ENCODE measurements at regions of chr1 and their contacts with region 1.

Region 1: DNA sequence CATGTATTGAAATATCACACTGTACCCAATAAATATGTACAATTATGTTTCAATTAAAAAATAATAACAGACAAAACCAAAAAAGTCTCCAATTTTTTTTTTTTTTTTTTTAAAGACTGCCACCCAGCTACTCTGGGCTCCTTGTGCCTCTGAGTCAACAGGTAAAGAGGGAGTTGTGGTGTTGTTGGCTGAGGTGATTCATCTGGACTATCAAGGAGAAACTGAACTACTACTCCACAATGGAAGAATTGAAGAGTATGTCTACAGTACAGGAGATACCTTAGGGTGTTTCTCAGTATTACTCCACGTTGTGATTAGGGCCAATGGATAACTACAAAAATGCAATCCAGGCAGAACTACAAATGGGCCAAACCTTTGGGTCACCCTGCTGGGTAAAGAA is 67.9 kb downstream of the SCMH1 start:
- DNase-seq: no peak
- H3K4me3 ChIP-seq: no peak overlapping the region
- H3K27ac ChIP-seq: no peak overlapping the region
- H3K4me1 ChIP-seq: no peaks in the 10 kb centered on the region
- H3K27me3 ChIP-seq: no peaks in the 10 kb centered on the region
- CTCF ChIP-seq: no peak

Region 2: GRCh38 chr1:40884055-40884795 is 289.9 kb before region 1 on chr1:
- CTCF ChIA-PET with region 1: no interaction called
- POLR2A ChIA-PET with region 1: no interaction called
- intact Hi-C with region 1: no loop called
- DNase-seq: no peak
- H3K4me3 ChIP-seq: no peak overlapping the region
- H3K27ac ChIP-seq: no peak overlapping the region
- H3K4me1 ChIP-seq: peaks cover 12% of the 10 kb centered on the region; the same call in 1 of the 2 replicates
- H3K27me3 ChIP-seq: no peaks in the 10 kb centered on the region
- CTCF ChIP-seq: no peak

Region 3: DNA sequence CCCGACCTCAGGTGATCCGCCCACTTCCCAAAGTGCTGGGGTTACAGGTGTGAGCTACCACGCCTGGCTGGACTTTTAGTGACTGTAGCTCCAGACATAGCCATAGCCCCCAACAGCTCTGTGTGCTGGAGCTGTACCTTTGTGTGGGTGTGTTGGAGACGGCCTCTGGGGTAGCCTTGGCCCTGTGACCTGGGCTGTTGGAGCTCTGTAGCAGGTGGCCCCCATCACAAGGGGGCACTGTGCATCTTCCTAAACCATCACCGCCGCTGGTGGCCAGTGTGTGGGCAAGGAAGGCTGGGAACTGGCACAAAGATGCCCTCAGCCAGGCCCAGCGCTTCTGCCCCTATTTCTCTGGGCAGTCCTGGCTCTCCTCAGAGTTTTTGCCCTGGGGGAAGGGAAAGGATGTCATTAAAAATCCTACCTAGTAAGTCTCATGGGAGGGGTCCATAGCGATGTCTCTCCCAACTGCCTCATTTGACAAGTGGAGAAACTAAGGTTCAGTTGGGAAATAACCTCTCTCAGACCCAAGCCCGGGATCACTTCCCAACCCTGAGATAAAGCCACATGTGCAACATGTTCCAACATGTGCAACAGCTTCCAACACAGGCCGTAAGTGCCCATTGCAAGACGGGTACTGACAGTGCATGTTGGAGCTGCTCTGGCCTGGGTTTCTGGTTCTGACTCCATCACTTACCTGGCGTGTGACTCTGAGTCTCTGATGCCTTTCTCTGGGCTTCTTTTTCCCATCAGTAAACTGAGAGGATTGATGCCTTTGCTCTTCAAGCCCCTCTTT is 148.9 kb after region 1 on chr1:
- CTCF ChIA-PET with region 1: no interaction called
- POLR2A ChIA-PET with region 1: no interaction called
- intact Hi-C with region 1: no loop called
- DNase-seq: peak; percentile 60 to 82
- H3K4me3 ChIP-seq: no peak overlapping the region
- H3K27ac ChIP-seq: no peak overlapping the region
- H3K4me1 ChIP-seq: peaks cover 15% of the 10 kb centered on the region
- H3K27me3 ChIP-seq: no peaks in the 10 kb centered on the region
- CTCF ChIP-seq: peak; percentile 84

Region 4: GRCh38 chr1:41919764-41920397 is 745.7 kb after region 1 on chr1:
- CTCF ChIA-PET with region 1: no interaction called
- POLR2A ChIA-PET with region 1: interaction called, 28 read pairs
- intact Hi-C with region 1: no loop called
- DNase-seq: peak; percentile 83
- H3K4me3 ChIP-seq: peak overlapping the region; percentile 87
- H3K27ac ChIP-seq: peak overlapping the region; percentile 75
- H3K4me1 ChIP-seq: peaks cover 57% of the 10 kb centered on the region
- H3K27me3 ChIP-seq: no peaks in the 10 kb centered on the region
- CTCF ChIP-seq: no peak